Activated T-helper 1 cell treated with anti-CD3 and anti-CD28 coated beads, Interleukin-12 subunit alpha, Interleukin-12 subunit beta, Interleukin-2, Interleukin-4 antibody, amounts not matched to agents 30 ng/mL and 10 ng/mL and 1 ng/mL, durations not matched to agents 14 hours and 24 hours and 36 hours (primary cell): ENCODE measurements at regions of chr20 and their contacts with region 1.

Region 1: DNA sequence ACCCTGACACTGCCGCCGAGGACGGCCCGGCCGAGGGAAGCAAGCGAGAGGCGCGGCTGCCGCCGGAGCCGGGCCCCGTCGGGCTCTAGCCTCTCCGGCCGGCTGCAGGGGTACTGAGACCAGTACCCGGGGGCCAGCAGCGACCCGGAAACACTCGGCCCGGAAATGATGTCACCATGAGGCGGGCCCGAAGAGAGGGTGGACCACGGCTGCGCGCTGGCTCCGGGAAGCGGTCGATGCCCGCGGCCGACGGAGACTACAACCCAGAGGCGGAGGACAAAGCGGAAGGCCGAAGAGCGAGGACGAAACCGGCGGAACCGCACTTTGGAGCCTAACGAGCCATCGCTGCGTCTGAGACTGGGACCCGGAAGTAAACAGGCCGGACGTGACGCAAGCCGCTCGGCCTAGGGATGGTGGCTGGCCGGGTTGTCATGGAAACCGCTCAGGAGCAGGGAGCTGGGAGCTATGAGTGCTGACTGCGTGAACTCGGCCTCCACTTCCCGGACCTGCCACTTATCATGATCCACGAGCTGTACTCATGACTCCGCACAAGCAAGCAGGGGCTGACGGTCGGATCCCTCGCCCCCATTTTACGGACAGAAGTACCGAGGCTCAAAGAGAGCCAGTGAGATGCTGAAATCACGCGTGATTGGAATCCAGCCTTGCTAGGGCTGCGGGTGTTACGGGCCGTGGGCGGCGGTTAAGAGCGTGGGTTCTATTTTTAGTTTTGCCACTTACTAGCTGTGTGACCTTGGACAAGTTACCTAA is at the start of gene SPATA2:
- DNase-seq: peak; percentile 86
- H3K4me3 Mint-ChIP-seq: peak within 1 kb of the TSS; percentile 95
- H3K27ac Mint-ChIP-seq: peak within 1 kb of the TSS; percentile 99
- H3K4me1 Mint-ChIP-seq: peaks cover 27% of the 10 kb centered on the region
- H3K27me3 Mint-ChIP-seq: peaks cover 1% of the 10 kb centered on the region
- total RNA-seq, gene SPATA2: 9.7 and 10.4 TPM in 2 replicates

Region 2: GRCh38 chr20:49893242-49894072 is 22.1 kb before region 1 on chr20:
- intact Hi-C with region 1: loop called (anchors 1 kb)
- DNase-seq: no peak
- H3K4me3 Mint-ChIP-seq: peak overlapping the region; percentile 29
- H3K27ac Mint-ChIP-seq: peak overlapping the region; percentile 70
- H3K4me1 Mint-ChIP-seq: peaks cover 22% of the 10 kb centered on the region
- H3K27me3 Mint-ChIP-seq: peaks cover 4% of the 10 kb centered on the region

Region 3: DNA sequence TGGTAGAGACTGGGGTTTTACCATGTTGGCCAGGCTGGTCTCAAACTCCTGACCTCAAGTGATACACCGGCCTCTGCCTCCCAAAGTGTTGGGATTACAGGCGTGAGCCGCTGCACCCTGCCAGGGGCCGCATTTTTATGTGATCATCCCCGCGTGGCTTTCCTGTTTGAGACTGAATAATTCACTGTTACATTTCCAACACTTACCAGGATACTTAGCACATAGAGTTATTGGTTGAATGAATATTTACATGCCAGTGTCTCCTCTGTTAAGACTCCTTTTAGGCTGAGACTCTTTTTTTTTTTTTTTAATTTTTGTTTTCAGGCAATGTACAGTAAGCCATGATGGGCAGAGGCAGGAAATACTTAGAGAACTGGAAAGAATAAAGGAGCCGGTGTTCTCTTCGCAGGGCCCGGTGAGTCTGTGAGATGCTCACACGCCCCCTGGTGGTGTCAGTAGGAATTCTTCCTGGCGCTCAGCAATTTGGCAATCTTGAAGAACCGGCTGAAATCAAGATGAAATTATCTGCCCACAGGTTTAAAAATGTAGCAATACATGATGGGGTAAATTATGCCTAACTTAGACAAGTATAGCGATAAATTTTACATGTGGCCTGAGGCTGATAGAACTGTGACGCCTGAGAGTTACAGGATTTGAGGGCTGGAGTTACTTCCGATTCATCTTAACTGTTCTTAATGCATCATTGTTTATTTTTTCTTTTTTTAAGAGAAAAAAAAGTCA is 13.0 kb after region 1 on chr20:
- intact Hi-C with region 1: loop called (anchors 1 kb)
- DNase-seq: peak; percentile 69
- H3K4me3 Mint-ChIP-seq: no peak overlapping the region
- H3K27ac Mint-ChIP-seq: peak overlapping the region; percentile 36
- H3K4me1 Mint-ChIP-seq: peaks cover 11% of the 10 kb centered on the region
- H3K27me3 Mint-ChIP-seq: peaks cover 11% of the 10 kb centered on the region

Region 4: DNA sequence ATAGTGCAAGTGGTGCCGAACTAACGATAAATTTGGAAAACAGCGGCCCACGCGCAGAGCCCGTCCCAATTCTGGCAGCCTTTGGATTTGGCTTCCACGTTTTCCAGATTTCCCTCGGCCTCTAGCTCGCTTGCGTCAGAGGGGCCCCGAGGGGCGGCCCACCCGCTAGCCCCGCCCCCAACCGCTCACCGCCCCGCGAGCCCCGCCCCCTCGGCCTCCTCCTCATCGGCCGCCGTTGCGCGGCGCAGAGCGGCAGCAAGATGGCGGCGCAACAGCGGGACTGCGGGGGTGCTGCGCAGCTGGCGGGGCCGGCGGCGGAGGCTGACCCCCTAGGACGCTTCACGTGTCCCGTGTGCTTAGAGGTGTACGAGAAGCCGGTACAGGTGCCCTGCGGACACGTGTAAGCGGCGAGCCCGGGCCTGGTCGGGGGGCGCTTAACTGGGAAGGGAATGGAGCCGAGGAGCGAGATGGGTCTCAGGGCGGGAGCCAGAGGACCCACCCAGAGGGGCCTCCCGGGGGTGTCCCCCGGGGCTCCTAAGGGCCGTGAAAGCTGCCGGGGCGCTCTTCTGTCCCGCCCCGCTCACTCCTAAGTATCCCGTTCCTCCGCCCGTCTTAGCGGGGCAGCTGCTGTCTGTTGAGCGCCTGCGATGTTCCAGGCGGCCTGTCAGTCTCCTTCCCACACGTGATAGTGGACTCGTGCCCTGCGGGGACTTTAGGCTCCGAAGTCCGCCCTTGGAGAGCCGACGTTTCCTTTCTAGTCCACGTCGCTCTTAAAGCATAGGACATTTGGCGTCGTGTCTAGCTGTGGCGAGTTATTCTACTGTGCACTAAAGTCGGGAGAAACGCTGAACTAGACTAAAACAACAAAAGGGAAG is 20.8 kb after region 1 on chr20 and contains the start of gene RNF114:
- intact Hi-C with region 1: loop called (anchors 1 kb)
- DNase-seq: peak; percentile 82
- H3K4me3 Mint-ChIP-seq: peak within 1 kb of the TSS; percentile 94
- H3K27ac Mint-ChIP-seq: peak within 1 kb of the TSS; percentile 93
- H3K4me1 Mint-ChIP-seq: peaks cover 34% of the 10 kb centered on the region
- H3K27me3 Mint-ChIP-seq: no peaks in the 10 kb centered on the region
- total RNA-seq, gene RNF114: 58.7 and 60.3 TPM in 2 replicates

Region 5: DNA sequence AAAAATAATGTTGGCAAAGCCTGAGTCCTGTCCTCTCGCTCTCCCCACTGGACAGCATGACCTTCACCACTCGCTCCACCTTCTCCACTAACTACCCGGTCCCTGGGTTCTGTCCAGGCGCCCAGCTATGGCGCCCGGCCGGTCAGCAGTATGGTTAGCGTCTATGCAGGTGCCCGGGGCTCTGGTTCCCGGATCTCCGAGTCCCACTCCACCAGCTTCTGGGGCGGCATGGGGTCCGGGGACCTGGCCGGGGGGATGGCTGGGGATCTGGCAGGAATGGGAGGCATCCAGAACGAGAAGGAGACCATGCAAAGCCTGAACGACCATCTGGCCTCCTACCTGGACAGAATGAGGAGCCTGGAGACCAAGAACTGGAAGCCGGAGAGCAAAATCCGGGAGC is 41.1 kb after region 1 on chr20:
- intact Hi-C with region 1: no loop called
- DNase-seq: no peak
- H3K4me3 Mint-ChIP-seq: no peak overlapping the region
- H3K27ac Mint-ChIP-seq: no peak overlapping the region
- H3K4me1 Mint-ChIP-seq: no peaks in the 10 kb centered on the region
- H3K27me3 Mint-ChIP-seq: no peaks in the 10 kb centered on the region